Vagina (tissue), 2 donors: ENCODE measurements at regions of chr5 and their contacts with region 1.

Region 1: DNA sequence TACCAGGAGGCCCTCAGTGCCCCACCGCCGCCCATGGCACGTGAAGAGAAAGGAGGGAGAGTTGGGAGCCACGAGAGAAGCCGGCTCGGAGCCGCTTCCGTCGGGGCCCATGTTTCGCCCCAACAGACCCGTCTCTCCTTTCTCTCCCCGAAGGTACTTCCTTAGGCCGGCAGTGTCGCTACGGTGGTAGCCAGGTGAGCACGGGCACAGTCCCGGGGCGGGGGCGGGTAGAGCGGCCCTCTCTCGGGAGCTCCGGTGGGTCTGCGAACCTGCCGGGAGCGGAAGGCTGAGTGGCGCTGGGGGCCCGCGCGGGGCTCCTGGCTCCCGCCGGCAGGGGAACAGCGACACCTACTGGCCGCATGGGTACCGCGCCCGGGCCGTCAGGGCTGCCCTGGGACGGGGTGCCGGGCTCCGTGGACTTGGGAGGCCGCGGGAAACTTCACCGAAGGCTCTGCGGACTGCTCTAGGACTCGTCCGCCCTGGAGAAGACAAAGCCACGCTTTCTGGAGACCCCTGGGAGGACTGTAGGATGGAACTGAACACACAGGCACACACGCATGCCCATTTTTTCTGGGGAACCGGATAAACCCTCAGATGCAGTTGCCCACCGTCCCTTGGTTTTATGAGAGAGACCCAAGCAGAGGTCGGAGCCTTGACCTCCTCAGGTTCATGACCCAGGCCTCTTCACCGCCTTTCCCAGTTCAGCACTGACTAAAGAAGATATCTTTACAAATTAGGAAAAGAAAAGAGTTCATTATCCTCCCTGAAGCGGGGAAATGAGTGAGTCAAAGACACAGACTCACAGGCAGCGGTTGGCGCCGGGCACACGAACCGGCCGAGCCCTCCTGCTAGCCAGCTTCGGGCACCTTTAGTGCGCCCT is 202.5 kb downstream of the MEF2C start:
- DNase-seq: no peak
- H3K4me3 ChIP-seq: peak overlapping the region; percentile 34 to 46
- H3K27ac ChIP-seq: no peak overlapping the region
- H3K4me1 ChIP-seq: peaks cover 19% of the 10 kb centered on the region
- H3K27me3 ChIP-seq: peaks cover 23% of the 10 kb centered on the region
- CTCF ChIP-seq: peak; percentile 76 to 89 (median 78)
- POLR2A ChIP-seq: no peak

Region 2: DNA sequence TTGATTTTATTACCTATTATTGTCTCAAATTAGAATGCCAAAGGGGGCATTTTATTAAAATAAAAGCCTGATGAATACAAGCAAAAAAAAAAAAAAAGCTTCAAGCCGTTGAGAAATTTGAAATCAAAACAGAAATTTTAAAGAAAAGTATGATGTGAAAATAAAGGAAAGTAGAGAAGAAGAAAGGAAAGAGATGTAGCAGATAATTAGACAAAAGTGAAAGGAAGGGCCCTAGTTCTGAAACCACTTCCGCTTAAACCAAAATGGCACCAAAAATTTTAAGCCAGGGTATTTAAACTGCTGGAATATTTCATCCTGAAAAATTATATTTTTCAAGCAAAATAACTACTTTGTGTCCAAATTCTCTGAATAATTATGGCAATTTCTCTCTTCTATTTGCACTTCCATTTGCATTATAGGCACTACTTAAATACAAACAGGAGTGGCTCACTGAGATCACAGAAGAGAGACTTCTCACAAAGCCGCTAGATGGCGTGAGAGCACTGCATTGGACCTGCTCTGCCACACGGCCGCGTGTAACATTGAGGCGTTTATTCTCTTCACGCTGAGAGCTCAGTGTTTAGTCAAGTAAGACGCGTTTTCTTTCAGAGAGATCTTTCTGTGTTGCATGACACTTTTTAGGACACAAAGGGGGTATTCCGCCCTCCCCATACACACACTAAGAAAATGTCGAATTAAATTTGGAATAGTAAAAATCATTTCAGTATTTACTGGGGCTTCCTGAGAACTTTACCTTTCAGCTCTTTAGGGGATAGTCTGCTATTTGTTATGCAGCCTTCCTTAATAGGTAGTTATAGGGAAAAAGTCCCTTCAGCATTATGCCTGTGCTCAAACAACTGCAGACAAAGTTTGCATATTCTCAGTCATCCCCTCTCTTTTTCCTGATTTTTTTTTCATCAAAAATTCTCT is 899.4 kb before region 1 on chr5:
- intact Hi-C with region 1: loop called (anchors 5 kb)
- DNase-seq: no peak
- H3K4me3 ChIP-seq: no peak overlapping the region
- H3K27ac ChIP-seq: no peak overlapping the region
- H3K4me1 ChIP-seq: no peaks in the 10 kb centered on the region
- H3K27me3 ChIP-seq: no peaks in the 10 kb centered on the region
- CTCF ChIP-seq: peak; percentile 46 to 81 (median 76)
- POLR2A ChIP-seq: no peak

Region 3: DNA sequence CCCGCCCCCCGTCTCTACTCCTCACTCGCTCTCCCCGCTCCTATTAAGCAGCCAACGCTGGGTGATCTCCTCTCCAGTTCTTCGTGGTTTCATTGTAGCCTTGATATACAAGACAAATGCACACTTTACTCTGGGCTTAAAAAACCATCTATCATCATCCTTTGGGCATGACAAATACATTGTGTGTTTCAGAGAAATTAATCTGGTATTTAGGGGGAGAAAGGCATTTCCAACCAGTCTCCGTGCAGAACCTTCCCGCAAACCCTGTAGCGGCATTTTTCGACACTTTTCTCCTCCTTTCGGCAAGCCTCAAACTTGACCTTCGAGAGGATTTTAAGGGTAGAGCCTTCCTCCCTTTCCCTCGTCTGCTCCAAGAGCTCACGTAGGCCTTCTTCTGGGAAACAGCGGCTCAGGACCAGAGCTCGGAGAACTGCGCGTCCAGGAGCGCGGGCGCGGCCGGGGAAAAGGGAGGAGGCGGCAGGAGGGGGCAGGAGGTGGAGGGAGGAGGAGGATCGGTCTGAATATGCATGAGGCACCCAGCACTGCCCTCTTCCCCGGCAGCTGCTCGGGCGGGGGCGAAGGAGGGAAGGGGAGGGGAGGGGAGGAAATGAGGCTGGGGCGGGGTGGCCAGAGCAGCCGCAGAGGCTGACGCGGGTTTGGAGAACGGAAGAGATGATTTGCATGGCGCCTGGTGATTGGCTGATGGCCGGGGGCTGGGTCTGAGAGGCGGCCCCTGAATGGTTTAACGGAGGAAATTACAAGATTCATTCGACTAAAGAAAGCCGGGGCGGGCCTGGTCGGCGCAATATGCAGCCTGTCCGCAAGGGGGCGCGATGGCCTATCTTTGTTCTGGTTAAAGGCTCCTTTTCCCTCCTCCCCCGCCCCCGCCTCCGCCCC is 539.4 kb before region 1 on chr5:
- intact Hi-C with region 1: loop called (anchors 10 kb)
- DNase-seq: peak in 1 of 2 donors; percentile 99
- H3K4me3 ChIP-seq: peak overlapping the region; percentile 49 to 53
- H3K27ac ChIP-seq: peak overlapping the region; percentile 67
- H3K4me1 ChIP-seq: peaks cover 26% of the 10 kb centered on the region
- H3K27me3 ChIP-seq: no peaks in the 10 kb centered on the region
- CTCF ChIP-seq: peak; percentile 6 to 72 (median 23)
- POLR2A ChIP-seq: peak in 1 of 2 donors; percentile 32

Region 4: DNA sequence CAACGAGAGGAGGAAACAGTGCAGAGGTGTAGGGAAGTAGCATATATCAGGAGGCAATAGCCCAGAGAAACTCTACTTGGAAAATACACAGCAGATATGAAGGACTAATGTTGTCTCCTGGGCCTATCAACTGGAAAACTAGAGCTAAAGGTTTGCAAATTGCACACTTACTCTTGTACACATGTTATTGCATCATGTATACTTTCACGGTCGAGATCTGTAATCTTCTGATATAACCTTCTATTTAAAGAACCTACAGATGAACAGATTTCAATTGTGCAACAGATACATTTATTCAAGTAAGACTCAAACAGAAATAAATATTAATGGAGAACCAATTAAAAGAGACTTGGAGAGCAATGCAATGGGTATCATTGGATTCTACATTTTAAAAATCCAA is 155.6 kb before region 1 on chr5:
- intact Hi-C with region 1: no loop called
- DNase-seq: no peak
- H3K4me3 ChIP-seq: no peak overlapping the region
- H3K27ac ChIP-seq: no peak overlapping the region
- H3K4me1 ChIP-seq: no peaks in the 10 kb centered on the region
- H3K27me3 ChIP-seq: no peaks in the 10 kb centered on the region
- CTCF ChIP-seq: no peak
- POLR2A ChIP-seq: no peak